Left ventricle myocardium inferior (tissue), 1 donor: ENCODE measurements at regions of chr2 and their contacts with region 1.

Region 1: DNA sequence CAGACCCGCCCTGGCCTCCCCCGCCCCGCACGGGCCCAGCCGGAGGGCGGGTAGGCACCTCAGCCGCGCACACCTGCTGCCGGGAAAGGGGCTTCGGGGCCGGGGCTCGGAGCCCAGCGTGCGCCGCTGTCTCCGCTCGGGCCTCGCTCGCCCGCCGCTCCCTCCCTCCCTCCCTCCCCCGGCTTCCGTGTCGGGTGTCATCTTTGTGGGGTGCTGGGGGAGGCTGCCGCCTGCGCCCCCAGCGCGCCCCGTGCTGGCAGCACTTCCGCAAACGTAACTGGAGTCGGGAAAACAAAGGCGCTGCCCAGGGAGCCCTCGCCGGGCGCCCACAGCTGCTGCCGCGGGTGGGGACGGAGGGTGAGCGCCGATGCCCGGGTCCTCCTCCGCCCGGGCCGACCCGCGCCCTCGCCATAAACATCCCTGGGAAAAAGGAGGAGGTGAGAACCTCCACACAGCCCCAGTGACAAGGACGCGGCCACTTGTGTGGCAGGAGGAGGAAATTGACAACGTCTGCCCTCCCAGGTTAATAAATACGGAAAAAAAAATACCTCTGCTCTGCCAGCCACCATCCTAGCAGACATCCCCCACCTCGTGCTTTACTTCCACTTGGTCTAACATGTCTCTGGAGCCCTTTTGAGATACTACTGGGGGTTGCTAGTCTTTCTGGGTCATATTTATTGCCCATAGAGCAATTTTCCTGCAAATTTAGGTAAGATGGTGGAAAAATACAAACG is 550 bp downstream of the MFSD6 start:
- DNase-seq: peak; percentile 28
- H3K4me3 ChIP-seq: peak overlapping the region; percentile 92
- H3K27ac ChIP-seq: peak overlapping the region; percentile 89
- H3K4me1 ChIP-seq: peaks cover 45% of the 10 kb centered on the region
- H3K27me3 ChIP-seq: no peaks in the 10 kb centered on the region
- CTCF ChIP-seq: no peak

Region 2: GRCh38 chr2:190468814-190469569 is 60.3 kb after region 1 on chr2:
- intact Hi-C with region 1: loop called (anchors 5 kb)
- DNase-seq: peak; percentile 74
- H3K4me3 ChIP-seq: peak overlapping the region; percentile 33
- H3K27ac ChIP-seq: peak overlapping the region; percentile 90
- H3K4me1 ChIP-seq: peaks cover 69% of the 10 kb centered on the region
- H3K27me3 ChIP-seq: no peaks in the 10 kb centered on the region
- CTCF ChIP-seq: no peak

Region 3: GRCh38 chr2:190497428-190497827 is 88.7 kb after region 1 on chr2:
- intact Hi-C with region 1: loop called (anchors 10 kb)
- DNase-seq: no peak
- H3K4me3 ChIP-seq: no peak overlapping the region
- H3K27ac ChIP-seq: no peak overlapping the region
- H3K4me1 ChIP-seq: peaks cover 11% of the 10 kb centered on the region
- H3K27me3 ChIP-seq: no peaks in the 10 kb centered on the region
- CTCF ChIP-seq: no peak

Region 4: GRCh38 chr2:190526105-190526750 is 117.5 kb after region 1 on chr2:
- intact Hi-C with region 1: no loop called
- DNase-seq: no peak
- H3K4me3 ChIP-seq: no peak overlapping the region
- H3K27ac ChIP-seq: no peak overlapping the region
- H3K4me1 ChIP-seq: peaks cover 14% of the 10 kb centered on the region
- H3K27me3 ChIP-seq: no peaks in the 10 kb centered on the region
- CTCF ChIP-seq: no peak